GM12878 (cell line): ENCODE measurements at regions of chr3 and their contacts with region 1.

Region 1: GRCh38 chr3:185983495-185984141 is 45.8 kb upstream of the TRA2B start:
- DNase-seq: no peak
- ATAC-seq: peak; percentile 96
- H3K4me3 ChIP-seq: no peak overlapping the region
- H3K27ac ChIP-seq: no peak overlapping the region
- H3K4me1 ChIP-seq: no peaks in the 10 kb centered on the region
- H3K27me3 ChIP-seq: no peaks in the 10 kb centered on the region
- CTCF ChIP-seq: peak; percentile 84 to 87 (median 86)
- EP300 ChIP-seq: no peak
- POLR2A ChIP-seq: no peak
- RAD21 ChIP-seq: peak; percentile 99

Region 2: GRCh38 chr3:186609247-186609868 is 625.7 kb after region 1 on chr3:
- CTCF ChIA-PET with region 1: interaction called, 80 read pairs
- POLR2A ChIA-PET with region 1: no interaction called
- RAD21 ChIA-PET with region 1: interaction called, 3 read pairs
- SMC1A ChIA-PET with region 1: interaction called, 7 read pairs
- in situ Hi-C with region 1: loop called (anchors 5 kb)
- intact Hi-C with region 1: no loop called
- DNase-seq: no peak
- ATAC-seq: peak; percentile 93
- H3K4me3 ChIP-seq: no peak overlapping the region
- H3K27ac ChIP-seq: no peak overlapping the region
- H3K4me1 ChIP-seq: no peaks in the 10 kb centered on the region
- H3K27me3 ChIP-seq: peaks cover 2 to 3% of the 10 kb centered on the region in 2 experiments; a peak in 3 of 4 replicates
- CTCF ChIP-seq: peak; percentile 30 to 50 (median 46); a peak in 5 of 6 replicates
- EP300 ChIP-seq: no peak
- POLR2A ChIP-seq: no peak
- RAD21 ChIP-seq: peak; percentile 38; the same call in 1 of the 2 replicates